Dendritic cell treated with granulocyte-macrophage colony-stimulating factor and Interleukin-4, amounts not matched to agents 40 ng/mL and 50 ng/mL, for 4 days (primary cell): ENCODE measurements at regions of chr18 and their contacts with region 1.

Region 1: DNA sequence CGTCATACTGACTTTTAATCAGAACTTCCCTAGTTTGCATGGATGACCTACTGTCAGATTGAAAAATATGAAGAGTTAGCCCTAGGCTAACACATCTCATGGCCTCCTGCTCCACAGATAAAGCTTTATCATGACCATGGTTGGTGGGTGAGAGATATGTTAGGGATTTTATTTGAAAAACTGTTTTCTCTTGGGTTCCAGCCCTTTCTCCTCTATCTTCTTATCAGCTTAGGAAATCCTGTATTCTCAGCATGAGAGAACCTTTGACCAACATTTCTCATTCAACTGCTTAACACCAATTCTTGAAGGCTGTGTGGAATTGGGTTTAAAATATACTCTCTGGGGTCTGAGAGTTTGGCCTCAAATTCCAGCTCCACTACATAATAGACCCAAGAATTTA is 1407.0 kb upstream of the CELF4 start:
- H3K4me3 Mint-ChIP-seq: no peak overlapping the region
- H3K27ac Mint-ChIP-seq: no peak overlapping the region
- H3K4me1 Mint-ChIP-seq: no peaks in the 10 kb centered on the region
- H3K27me3 Mint-ChIP-seq: no peaks in the 10 kb centered on the region

Region 2: GRCh38 chr18:38909972-38910371 is 62.6 kb before region 1 on chr18:
- intact Hi-C with region 1: loop called (anchors 10 kb)
- H3K4me3 Mint-ChIP-seq: no peak overlapping the region
- H3K27ac Mint-ChIP-seq: no peak overlapping the region
- H3K4me1 Mint-ChIP-seq: no peaks in the 10 kb centered on the region
- H3K27me3 Mint-ChIP-seq: no peaks in the 10 kb centered on the region

Region 3: DNA sequence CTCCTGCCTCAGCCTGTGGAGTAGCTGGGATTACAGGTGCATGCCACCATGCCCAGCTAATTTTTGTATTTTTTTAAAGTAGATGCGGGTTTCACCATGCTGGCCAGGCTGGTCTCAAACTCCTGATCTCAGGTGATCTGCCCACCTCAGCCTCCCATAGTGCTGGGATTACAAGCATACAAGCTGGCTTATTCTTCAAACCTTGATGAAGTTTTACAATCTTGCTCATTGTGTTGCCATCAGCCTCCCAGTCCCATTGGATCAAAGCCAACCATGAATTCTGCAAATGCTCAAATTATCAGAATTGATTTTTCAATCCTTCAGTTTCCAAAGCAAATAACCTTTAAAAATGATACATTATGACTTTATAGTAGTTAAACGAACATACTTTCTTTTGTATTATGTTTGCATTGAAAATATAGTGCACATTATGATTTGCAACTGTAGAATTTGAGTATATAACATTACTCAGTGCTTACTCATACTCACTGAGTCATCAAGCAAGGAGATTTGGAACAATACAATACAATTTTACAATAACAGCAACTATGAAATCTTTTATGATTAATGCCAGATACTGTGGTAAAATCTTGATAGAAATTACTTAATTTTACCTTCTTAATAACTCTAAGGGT is 85.0 kb after region 1 on chr18:
- intact Hi-C with region 1: no loop called
- H3K4me3 Mint-ChIP-seq: no peak overlapping the region
- H3K27ac Mint-ChIP-seq: no peak overlapping the region
- H3K4me1 Mint-ChIP-seq: no peaks in the 10 kb centered on the region
- H3K27me3 Mint-ChIP-seq: no peaks in the 10 kb centered on the region